ENCODE measurements at regions of chr22 and their contacts with region 1.

Region 1: GRCh38 chr22:19679522-19680101 is 34.7 kb upstream of the SEPTIN5 start:
- DNase-seq: peak; percentile 77

Region 2: DNA sequence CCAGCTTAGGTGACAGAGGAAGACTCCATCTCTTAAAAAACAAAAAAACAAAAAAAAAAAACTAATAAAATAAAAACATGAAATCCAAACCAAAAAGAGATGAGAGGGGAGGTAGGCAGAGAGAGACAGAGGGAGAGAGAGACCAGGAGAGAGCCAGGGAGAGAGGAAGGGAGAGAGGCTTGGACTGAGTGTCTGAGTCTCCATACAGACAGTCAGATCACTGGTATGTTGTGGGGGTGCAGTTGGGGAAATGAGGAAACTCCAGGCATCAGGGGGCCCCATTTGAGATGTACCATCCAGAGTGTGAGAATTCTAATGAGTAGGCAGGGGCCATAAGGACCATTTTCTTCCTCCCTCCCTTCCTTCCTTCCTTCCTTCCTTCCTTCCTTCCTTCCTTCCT is 18.5 kb before region 1 on chr22:
- CTCF ChIA-PET with region 1: interaction called, 10 read pairs
- POLR2A ChIA-PET with region 1: interaction called, 4 read pairs
- DNase-seq: no peak

Region 3: GRCh38 chr22:19691721-19692341 is 12.2 kb after region 1 on chr22:
- CTCF ChIA-PET with region 1: interaction called, 24 read pairs
- POLR2A ChIA-PET with region 1: no interaction called
- DNase-seq: peak; percentile 65

Region 4: DNA sequence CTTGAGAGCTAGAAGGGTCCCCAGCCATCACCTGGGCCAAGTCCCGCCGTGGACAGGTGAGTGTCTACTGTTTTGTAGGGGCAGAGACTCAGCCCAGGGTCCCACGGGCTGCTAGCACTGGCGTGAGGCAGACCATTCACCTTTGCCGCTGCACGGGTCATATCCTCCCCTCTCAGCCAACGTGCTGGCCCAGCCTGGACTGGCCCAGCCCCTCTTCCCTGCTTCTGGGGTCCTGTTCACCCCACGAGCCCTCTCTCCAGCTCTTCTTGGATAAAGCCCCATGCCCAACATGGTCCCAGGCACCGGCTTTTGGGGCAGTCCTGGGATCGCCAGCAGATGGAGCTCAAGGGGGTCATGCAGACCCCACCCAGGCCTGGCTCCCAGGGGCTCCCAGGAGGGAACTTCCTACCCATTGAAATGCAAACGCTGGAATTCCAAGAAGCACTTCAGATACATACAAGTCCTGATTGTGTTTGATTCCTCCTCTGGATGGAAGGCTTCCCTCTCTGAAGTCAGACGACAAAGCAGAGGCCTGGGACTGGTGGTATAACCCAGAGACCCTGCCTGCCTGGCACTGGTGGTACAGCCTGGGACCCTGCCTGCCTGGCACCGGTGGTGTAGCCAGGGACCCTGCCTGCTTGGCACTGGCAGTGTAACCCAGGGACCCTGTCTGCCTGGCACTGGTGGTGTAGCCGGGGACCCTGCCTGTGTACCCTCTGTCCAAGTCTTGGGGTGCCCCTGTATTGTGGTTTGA is 25.7 kb after region 1 on chr22:
- CTCF ChIA-PET with region 1: interaction called, 10 read pairs
- POLR2A ChIA-PET with region 1: no interaction called
- DNase-seq: no peak

Region 5: GRCh38 chr22:19832476-19833108 is 153.0 kb after region 1 on chr22:
- CTCF ChIA-PET with region 1: no interaction called
- POLR2A ChIA-PET with region 1: no interaction called
- DNase-seq: no peak